Left ventricle myocardium superior (tissue), 1 donor: ENCODE measurements at regions of chr11 and their contacts with region 1.

Region 1: GRCh38 chr11:120511116-120511819 is at the start of gene GRIK4:
- DNase-seq: peak; percentile 90
- ATAC-seq: peak; percentile 93
- total RNA-seq, gene GRIK4: 0.22 TPM

Region 2: DNA sequence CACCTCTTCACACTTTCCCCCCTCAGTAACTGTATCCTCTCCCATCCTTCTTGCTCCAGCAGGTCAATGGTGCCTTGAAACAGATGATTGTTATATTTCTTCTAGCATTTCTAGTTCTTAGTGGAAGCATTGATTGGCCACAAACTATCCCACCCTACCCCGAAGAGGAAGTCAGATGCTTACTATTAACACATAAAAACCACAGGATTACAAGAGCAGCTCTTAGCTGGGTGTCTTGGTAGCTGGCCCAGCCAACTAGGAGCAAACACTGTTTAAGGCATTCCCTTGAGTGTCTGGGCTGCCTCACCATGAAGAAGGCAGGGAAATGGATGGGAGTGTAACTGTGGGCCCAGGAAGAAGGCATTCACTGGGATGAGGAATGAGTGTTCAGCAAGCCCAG is 176.9 kb after region 1 on chr11:
- intact Hi-C with region 1: loop called (anchors 5 kb)
- DNase-seq: no peak
- ATAC-seq: no peak

Region 3: GRCh38 chr11:120945042-120945441 is 433.8 kb after region 1 on chr11:
- intact Hi-C with region 1: loop called (anchors 10 kb)
- DNase-seq: no peak
- ATAC-seq: no peak